Activated naive CD4-positive, alpha-beta T cell treated with anti-CD3 and anti-CD28 coated beads for 36 hours (primary cell): ENCODE measurements at regions of chr1 and their contacts with region 1.

Region 1: GRCh38 chr1:151327223-151327902 is at the start of gene PI4KB:
- DNase-seq: peak; percentile 96
- H3K4me3 Mint-ChIP-seq: peak within 1 kb of the TSS; percentile 93
- H3K27ac Mint-ChIP-seq: peak within 1 kb of the TSS; percentile 96
- H3K4me1 Mint-ChIP-seq: peaks cover 35% of the 10 kb centered on the region
- H3K27me3 Mint-ChIP-seq: no peaks in the 10 kb centered on the region
- total RNA-seq, gene PI4KB: 64.1 to 69.2 TPM

Region 2: DNA sequence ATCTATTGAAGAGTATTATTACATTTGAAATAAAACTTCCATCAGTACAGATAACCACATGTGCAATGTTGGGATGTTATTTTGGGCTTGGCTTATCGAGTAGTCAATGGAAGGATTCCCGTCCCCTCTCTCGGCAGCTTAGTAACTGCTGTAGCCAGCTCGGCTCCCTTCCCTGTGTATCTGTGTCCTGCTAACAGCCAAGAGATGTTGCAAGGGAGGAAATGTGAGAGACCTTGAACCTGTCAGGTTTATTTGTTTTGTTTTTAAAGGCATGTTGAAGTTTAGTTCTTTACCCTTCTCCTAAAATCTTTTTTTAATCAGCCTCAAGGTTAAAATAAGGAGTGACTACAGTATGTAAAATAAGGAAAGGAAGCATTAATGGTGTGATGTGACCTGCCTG is 853.7 kb before region 1 on chr1:
- CTCF ChIA-PET with region 1: no interaction called
- intact Hi-C with region 1: no loop called
- DNase-seq: no peak
- H3K4me3 Mint-ChIP-seq: no peak overlapping the region
- H3K27ac Mint-ChIP-seq: no peak overlapping the region
- H3K4me1 Mint-ChIP-seq: peaks cover 7% of the 10 kb centered on the region
- H3K27me3 Mint-ChIP-seq: no peaks in the 10 kb centered on the region

Region 3: DNA sequence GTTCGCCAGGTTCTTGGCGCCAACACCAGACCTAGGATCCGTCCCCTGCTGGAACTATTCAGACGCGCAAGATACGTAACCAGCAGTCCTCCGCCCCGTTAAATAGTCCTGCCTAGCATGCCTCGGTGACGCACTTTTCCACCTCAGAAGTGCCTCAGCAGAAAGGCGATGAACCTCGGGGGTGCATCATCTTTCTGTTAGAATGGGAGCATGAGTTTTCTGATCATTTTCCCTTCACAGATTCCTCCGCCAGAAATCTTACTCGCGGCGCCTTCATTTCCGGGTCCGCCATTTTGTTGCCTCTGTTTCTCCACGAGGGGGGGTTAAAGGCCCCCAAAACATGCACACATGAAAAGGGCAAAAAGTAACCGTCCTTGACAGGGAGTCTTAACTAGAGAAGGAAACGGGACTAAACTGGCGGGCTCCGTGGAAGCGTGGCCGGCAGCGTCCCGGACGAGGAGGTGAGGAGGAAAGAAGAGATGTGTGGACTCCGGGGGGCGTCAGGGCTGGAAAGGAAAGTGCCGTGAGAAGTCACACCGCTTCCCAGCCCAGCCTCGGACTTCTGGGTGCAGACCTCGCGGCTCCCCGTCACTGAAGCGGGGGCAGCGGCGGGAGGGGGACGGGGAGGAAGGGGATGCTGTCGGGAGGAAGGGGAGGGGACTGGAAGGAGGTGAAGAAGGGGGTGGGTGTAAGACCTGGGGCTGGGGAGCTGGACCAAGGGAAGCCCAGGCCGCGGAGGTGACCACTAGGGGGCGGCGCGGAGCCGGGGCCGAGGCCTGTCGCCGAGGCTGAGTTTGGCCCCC is 256.7 kb before region 1 on chr1 and contains the start of gene GABPB2:
- CTCF ChIA-PET with region 1: no interaction called
- intact Hi-C with region 1: loop called (anchors 2 kb)
- DNase-seq: peak; percentile 92
- H3K4me3 Mint-ChIP-seq: peak within 1 kb of the TSS; percentile 99
- H3K27ac Mint-ChIP-seq: peak within 1 kb of the TSS; percentile 100
- H3K4me1 Mint-ChIP-seq: peaks cover 26% of the 10 kb centered on the region
- H3K27me3 Mint-ChIP-seq: no peaks in the 10 kb centered on the region
- total RNA-seq, gene GABPB2: 16.1 to 16.2 TPM

Region 4: DNA sequence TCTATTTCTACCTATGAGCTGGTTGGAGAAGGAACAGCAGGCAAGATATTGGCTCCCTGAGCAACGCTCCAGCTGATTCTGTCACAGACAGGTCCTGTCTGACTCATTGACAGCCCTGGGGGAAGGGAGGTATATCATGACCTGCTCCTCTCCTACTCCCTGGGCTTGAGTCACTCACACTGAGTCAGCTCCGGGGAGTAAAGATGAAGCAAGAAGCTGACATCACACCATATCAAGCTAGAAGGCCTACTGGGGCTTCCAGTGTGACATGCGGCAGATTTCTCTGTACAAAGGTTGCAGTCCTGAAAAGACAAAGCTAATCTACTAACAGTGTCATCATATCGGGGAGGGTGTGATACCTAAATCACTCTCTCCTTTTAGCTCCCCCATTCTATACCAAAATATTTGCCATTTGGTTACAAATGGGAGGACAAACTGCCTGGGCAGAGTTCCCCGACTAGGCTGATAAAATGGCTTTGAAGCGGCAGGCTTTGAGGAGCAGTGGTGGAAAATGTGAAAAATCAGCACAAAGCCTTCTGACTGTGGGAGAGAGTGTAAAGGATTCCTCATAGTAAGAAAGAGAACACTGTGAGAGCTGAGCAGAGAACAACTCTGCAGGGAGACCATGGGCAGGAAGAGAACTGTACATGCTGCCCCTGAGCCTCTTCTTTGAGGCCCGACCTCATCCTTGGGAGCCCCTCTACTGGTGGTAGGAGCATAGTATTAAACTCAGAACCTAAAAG is 15.6 kb before region 1 on chr1:
- CTCF ChIA-PET with region 1: interaction called, 21 read pairs
- intact Hi-C with region 1: loop called (anchors 1 kb)
- DNase-seq: peak; percentile 94
- H3K4me3 Mint-ChIP-seq: no peak overlapping the region
- H3K27ac Mint-ChIP-seq: peak overlapping the region; percentile 92
- H3K4me1 Mint-ChIP-seq: peaks cover 37% of the 10 kb centered on the region
- H3K27me3 Mint-ChIP-seq: no peaks in the 10 kb centered on the region

Region 5: DNA sequence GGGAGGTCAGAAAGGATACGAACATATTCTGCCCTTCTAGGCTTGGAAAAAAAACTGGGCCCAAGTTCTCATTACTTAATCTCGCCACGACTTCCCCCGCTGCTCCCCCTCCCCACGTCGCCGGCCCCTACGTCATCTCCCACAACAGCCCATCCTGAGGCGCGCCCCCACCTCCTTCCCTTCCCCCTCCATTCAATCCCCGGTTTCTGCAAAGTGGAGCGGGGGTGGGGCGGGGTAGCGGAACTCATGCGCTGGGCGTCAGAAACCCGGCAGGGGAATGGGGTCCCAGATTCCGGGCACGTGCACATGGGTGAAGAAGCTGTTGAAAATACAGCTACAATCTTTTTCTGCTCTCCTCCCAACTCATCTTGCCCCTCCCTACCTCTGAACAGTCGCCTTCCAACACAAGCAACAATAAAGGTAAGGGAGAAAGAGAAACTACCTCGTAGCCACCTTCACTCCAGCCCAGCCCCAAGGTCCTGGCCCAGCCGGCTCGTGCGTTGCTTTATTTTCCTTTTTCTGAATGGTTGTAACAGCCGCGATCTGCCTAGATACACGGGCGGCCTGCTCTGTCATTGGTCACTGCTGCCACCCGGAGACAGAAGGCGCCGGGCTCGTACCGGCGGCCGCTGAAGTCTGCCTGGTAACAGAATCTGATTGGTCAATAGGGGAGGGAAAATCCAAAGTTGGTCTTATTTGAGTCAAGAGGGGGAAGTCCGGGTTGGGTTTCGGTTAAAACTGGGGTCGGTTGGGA is 19.6 kb after region 1 on chr1 and contains the start of gene RFX5:
- CTCF ChIA-PET with region 1: interaction called, 3 read pairs
- intact Hi-C with region 1: loop called (anchors 1 kb)
- DNase-seq: peak; percentile 97
- H3K4me3 Mint-ChIP-seq: peak within 1 kb of the TSS; percentile 93
- H3K27ac Mint-ChIP-seq: peak within 1 kb of the TSS; percentile 96
- H3K4me1 Mint-ChIP-seq: peaks cover 33% of the 10 kb centered on the region
- H3K27me3 Mint-ChIP-seq: no peaks in the 10 kb centered on the region
- total RNA-seq, gene RFX5: 62.3 to 63.4 TPM

Region 6: DNA sequence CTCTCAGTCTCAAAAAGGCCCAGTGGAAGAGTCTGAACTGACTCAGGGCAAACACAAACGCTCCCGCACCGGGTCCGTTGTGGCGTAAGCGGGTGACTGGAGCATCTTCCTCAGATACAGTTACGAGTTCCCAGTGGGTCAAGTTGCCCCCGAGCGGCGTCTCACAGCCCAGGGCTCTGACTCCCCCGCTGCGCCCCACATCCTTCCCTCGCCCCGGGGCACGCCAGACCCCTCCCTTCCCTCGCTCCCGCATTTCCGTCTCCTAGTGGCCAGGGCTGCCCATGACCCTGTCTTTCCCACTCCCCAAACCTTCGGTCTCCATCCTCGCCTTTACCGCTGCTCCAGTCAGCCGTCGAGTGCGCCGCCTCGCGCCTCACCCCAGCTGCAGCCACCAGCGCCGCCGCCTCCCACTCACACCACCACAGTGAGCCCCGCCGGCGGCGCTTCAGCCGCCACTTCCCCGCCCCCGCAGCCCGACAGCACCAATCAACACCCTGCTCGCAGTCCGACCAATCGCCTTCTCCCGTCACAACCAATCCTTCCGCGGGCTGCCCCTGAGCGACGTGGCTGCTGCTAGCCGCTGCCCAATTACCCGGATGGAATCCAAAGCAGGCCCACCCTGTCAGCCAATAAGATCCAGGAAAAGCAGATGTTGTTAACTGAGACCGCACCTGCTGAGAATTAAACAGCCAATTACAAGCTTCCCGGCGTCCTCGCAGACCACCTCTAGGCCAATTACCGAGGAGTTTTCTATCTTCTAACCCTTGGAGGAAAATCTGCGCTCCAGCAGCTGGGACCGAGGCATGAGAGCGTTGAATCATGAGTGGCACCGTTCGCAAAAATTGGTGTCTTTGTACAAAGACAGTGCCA is 462.9 kb after region 1 on chr1 and contains the start of gene TDRKH:
- CTCF ChIA-PET with region 1: no interaction called
- intact Hi-C with region 1: loop called (anchors 1 kb)
- DNase-seq: peak; percentile 99
- H3K4me3 Mint-ChIP-seq: peak within 1 kb of the TSS; percentile 98
- H3K27ac Mint-ChIP-seq: peak within 1 kb of the TSS; percentile 81
- H3K4me1 Mint-ChIP-seq: peaks cover 22% of the 10 kb centered on the region
- H3K27me3 Mint-ChIP-seq: no peaks in the 10 kb centered on the region
- total RNA-seq, gene TDRKH: 22.0 to 22.5 TPM